B cell (primary cell): ENCODE measurements at regions of chr15 and their contacts with region 1.

Region 1: DNA sequence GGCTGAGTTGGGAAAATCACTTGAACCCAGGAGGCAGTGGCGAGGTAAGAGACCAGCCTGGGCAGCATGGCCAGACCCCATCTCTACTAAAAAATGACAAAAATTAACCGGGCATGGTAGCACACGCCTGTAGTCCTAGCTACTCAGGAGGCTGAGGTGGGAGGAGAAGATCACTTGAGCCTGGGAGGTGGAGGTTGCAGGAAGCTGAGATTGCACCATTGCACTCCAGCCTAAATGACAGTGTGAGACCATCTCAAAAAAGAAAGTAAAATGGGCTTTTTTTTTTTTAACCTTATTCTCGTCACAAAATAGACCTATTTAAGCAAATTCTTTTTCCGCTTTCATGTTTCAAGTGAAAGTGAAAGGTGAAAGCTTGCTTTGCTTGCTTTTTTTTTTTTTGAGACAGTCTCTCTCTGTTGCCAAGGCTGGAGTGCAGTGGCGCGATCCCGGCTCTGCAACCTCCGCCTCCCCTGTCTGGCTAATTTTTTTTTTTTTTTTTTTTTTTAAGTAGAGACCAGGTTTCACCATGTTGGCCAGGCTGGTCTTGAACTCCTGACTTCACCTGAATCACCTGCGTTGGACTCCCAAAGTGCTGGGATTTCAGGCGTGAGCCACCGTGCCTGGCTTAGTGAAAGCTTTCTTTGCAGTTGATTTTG is 3.6 kb downstream of the PDIA3 start:
- DNase-seq: peak; percentile 86
- ATAC-seq: peak; percentile 40
- H3K4me3 ChIP-seq: peak overlapping the region in 4 of 5 experiments; percentile 16 to 57 (median 39)
- H3K4me3 Mint-ChIP-seq: peak overlapping the region; percentile 80
- H3K27ac ChIP-seq: peak overlapping the region; percentile 58 to 76
- H3K27ac Mint-ChIP-seq: peak overlapping the region; percentile 90
- H3K4me1 ChIP-seq: peaks cover 50 to 58% of the 10 kb centered on the region in 2 donors
- H3K4me1 Mint-ChIP-seq: peaks cover 56% of the 10 kb centered on the region
- H3K27me3 ChIP-seq: no peaks in the 10 kb centered on the region
- H3K27me3 Mint-ChIP-seq: no peaks in the 10 kb centered on the region
- CTCF ChIP-seq: no peak

Region 2: DNA sequence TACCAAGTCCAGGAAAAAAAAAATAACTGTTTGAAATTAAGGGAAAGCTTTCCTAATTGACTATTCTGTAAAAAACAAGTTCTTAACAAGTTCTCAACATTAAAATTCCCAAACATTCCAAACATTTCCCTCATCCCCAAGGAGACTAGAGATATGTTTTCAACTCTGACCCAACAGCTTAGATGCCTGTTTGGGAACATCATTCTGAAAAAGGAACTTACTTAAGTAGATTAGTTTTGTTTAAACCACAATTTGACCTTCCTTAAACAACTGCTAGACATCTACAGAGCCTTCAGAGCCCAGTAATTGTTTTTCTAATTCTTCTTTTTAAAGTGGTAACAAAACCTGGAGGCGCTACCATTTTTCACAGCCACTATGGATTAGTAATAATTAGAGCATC is 656.8 kb before region 1 on chr15:
- CTCF ChIA-PET with region 1: no interaction called
- POLR2A ChIA-PET with region 1: interaction called, 10 read pairs
- intact Hi-C with region 1: no loop called
- DNase-seq: no peak
- ATAC-seq: no peak
- H3K4me3 ChIP-seq: no peak overlapping the region
- H3K4me3 Mint-ChIP-seq: no peak overlapping the region
- H3K27ac ChIP-seq: peak overlapping the region in 1 of 2 donors; percentile 53
- H3K27ac Mint-ChIP-seq: no peak overlapping the region
- H3K4me1 ChIP-seq: peaks cover 6 to 9% of the 10 kb centered on the region in 2 donors
- H3K4me1 Mint-ChIP-seq: peaks cover 45% of the 10 kb centered on the region
- H3K27me3 ChIP-seq: no peaks in the 10 kb centered on the region
- H3K27me3 Mint-ChIP-seq: no peaks in the 10 kb centered on the region
- CTCF ChIP-seq: no peak

Region 3: DNA sequence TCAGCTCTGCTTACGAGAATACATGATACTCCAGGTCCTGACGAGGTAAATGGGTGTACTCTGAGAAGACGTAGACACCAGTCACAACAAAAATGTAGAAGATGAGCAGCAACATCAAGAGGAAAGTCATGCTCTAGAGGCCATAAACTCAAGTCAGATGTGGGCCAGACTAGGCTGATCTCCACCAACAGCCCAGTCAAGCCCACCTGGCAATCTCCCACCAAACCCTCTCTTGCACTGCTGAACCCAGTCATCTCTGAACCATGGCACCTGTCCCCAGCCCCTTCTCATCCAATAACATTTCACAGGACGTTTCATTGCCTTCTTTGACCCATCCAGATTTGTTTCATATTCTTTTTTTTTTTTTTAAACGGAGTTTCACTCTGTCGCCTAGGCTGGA is 14.4 kb before region 1 on chr15:
- CTCF ChIA-PET with region 1: no interaction called
- POLR2A ChIA-PET with region 1: no interaction called
- intact Hi-C with region 1: no loop called
- DNase-seq: no peak
- ATAC-seq: no peak
- H3K4me3 ChIP-seq: peak overlapping the region in 1 of 5 experiments; percentile 12
- H3K4me3 Mint-ChIP-seq: peak overlapping the region; percentile 52
- H3K27ac ChIP-seq: no peak overlapping the region
- H3K27ac Mint-ChIP-seq: no peak overlapping the region
- H3K4me1 ChIP-seq: peaks cover 0 to 5% of the 10 kb centered on the region in 2 donors
- H3K4me1 Mint-ChIP-seq: peaks cover 7% of the 10 kb centered on the region
- H3K27me3 ChIP-seq: no peaks in the 10 kb centered on the region
- H3K27me3 Mint-ChIP-seq: peaks cover 8% of the 10 kb centered on the region
- CTCF ChIP-seq: no peak

Region 4: GRCh38 chr15:43776718-43777583 is 27.1 kb after region 1 on chr15 and contains the start of gene ELL3:
- CTCF ChIA-PET with region 1: interaction called, 24 read pairs
- POLR2A ChIA-PET with region 1: interaction called, 17 read pairs
- intact Hi-C with region 1: loop called (anchors 1 kb)
- DNase-seq: peak; percentile 91
- ATAC-seq: peak; percentile 62
- H3K4me3 ChIP-seq: peak within 1 kb of the TSS; percentile 78 to 93 (median 88)
- H3K4me3 Mint-ChIP-seq: peak within 1 kb of the TSS; percentile 96
- H3K27ac ChIP-seq: peak within 1 kb of the TSS; percentile 73 to 76
- H3K27ac Mint-ChIP-seq: peak within 1 kb of the TSS; percentile 97
- H3K4me1 ChIP-seq: peaks cover 16 to 30% of the 10 kb centered on the region in 2 donors
- H3K4me1 Mint-ChIP-seq: peaks cover 41% of the 10 kb centered on the region
- H3K27me3 ChIP-seq: no peaks in the 10 kb centered on the region
- H3K27me3 Mint-ChIP-seq: no peaks in the 10 kb centered on the region
- CTCF ChIP-seq: peak; percentile 93
- total RNA-seq, gene ELL3: 88.8 and 90.0 TPM in 2 replicates

Region 5: GRCh38 chr15:43808960-43809678 is 59.3 kb after region 1 on chr15:
- CTCF ChIA-PET with region 1: interaction called, 3 read pairs
- POLR2A ChIA-PET with region 1: interaction called, 7 read pairs
- intact Hi-C with region 1: loop called (anchors 5 kb)
- DNase-seq: peak; percentile 87
- ATAC-seq: peak; percentile 94
- H3K4me3 ChIP-seq: peak overlapping the region in 1 of 5 experiments; percentile 28
- H3K4me3 Mint-ChIP-seq: peak overlapping the region; percentile 79
- H3K27ac ChIP-seq: peak overlapping the region; percentile 84 to 93
- H3K27ac Mint-ChIP-seq: peak overlapping the region; percentile 95
- H3K4me1 ChIP-seq: peaks cover 28 to 31% of the 10 kb centered on the region in 2 donors
- H3K4me1 Mint-ChIP-seq: peaks cover 25% of the 10 kb centered on the region
- H3K27me3 ChIP-seq: no peaks in the 10 kb centered on the region
- H3K27me3 Mint-ChIP-seq: no peaks in the 10 kb centered on the region
- CTCF ChIP-seq: no peak

Region 6: GRCh38 chr15:43930079-43930478 is 180.3 kb after region 1 on chr15:
- CTCF ChIA-PET with region 1: no interaction called
- POLR2A ChIA-PET with region 1: no interaction called
- intact Hi-C with region 1: no loop called
- DNase-seq: no peak
- ATAC-seq: no peak
- H3K4me3 ChIP-seq: no peak overlapping the region
- H3K4me3 Mint-ChIP-seq: no peak overlapping the region
- H3K27ac ChIP-seq: no peak overlapping the region
- H3K27ac Mint-ChIP-seq: no peak overlapping the region
- H3K4me1 ChIP-seq: peaks cover 0 to 13% of the 10 kb centered on the region in 2 donors
- H3K4me1 Mint-ChIP-seq: peaks cover 10% of the 10 kb centered on the region
- H3K27me3 ChIP-seq: no peaks in the 10 kb centered on the region
- H3K27me3 Mint-ChIP-seq: peaks cover 8% of the 10 kb centered on the region
- CTCF ChIP-seq: no peak